ENCODE measurements at regions of chr12 and their contacts with region 1.

Region 1: DNA sequence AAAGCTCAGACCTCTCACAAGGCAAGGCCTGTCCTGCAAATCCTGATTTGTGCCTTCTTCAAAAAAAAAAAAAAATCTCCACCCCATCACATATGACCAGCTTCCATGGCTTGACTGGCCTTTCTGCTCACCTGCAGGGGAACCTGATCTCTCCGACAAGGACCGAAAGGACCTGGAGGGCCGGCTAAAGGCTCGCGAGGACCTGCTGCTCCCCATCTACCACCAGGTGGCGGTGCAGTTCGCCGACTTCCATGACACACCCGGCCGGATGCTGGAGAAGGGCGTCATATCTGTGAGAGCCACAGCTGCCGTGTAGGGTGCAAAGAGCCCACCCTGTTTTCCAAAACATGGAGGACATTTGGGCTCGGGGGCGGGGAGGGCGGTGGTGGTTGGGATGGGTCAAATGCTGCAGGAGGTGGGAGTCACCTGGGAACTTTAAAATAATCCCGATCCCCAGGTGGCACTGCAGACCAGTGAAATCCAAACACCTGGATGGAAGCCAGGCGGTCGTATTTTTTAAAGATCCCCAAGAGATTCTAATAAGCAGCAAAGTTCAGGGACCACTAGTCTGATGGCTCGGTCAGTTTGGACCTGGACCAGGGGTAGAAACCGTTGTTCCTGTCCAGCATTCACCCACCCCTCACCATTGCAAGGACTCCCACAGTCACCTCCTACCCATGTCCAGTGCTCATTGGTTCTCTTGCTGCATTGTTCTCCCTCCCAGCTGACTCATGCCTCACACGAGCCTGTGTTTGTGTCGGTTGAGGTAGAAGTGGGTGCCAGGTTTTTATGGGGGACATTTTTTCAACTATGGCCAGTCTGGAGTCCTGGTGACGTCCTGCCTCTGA is 44.8 kb downstream of the FOXN4 start:
- DNase-seq: peak; percentile 78 to 86
- ATAC-seq: peak; percentile 80 to 94; a peak in 5 of 6 replicates
- H3K4me3 ChIP-seq: no peak overlapping the region
- H3K27ac ChIP-seq: no peak overlapping the region
- H3K4me1 ChIP-seq: no peaks in the 10 kb centered on the region
- CTCF ChIP-seq: peak; percentile 69
- EP300 ChIP-seq: no peak
- POLR2A ChIP-seq: no peak
- RAD21 ChIP-seq: peak; percentile 72 to 74

Region 2: DNA sequence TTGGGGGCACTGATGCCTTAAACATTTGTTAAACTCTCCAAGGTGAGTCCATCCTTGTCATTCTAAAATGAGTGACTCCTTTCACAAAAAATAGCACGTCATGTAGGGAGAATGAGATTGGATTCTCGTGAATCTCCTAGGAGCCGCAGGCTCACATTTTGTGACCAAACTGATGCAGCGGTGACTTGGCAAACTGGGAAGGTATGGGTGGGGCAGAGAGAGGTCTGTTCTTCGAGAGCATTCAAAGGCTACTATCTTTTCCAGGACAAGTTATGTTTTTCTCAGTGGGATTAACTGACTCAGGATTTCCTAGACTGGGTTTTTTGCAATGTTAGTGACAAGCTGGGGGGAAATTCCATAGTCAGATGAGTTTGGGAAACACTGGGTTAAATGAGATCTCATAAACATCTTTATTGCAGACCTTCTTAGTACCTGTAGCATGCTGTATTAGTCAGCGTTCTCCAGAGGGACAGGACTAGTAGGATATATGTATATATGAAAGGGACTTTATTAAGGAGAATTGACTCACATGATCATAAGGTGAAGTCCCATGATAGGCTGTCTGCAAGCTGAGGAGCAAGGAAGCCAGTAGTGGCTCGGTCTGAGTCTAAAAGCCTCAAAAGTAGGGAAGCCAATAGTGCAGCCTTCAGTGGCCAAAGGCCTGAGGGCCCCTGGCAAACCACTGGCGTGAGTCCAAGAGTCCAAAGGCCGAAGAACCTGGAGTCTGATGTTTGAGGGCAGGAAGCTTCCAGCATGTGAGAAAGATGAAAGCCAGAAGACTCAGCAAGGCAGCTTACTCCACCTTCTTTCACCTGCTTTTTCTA is 16.3 kb before region 1 on chr12:
- CTCF ChIA-PET with region 1: interaction called, 11 read pairs
- POLR2A ChIA-PET with region 1: no interaction called
- DNase-seq: peak in 1 of 2 experiments; percentile 49
- ATAC-seq: peak; percentile 43 to 70; a peak in 5 of 6 replicates
- H3K4me3 ChIP-seq: no peak overlapping the region
- H3K27ac ChIP-seq: peak overlapping the region; percentile 7 to 44; a peak in 3 of 6 replicates
- H3K4me1 ChIP-seq: peaks cover 15% of the 10 kb centered on the region
- CTCF ChIP-seq: no peak
- EP300 ChIP-seq: no peak
- POLR2A ChIP-seq: no peak
- RAD21 ChIP-seq: no peak

Region 3: GRCh38 chr12:109277899-109278762 is 13.8 kb after region 1 on chr12:
- CTCF ChIA-PET with region 1: interaction called, 21 read pairs
- POLR2A ChIA-PET with region 1: no interaction called
- DNase-seq: peak; percentile 30 to 66
- ATAC-seq: peak; percentile 59 to 75
- H3K4me3 ChIP-seq: no peak overlapping the region; the same call in 2 of the 3 replicates
- H3K27ac ChIP-seq: peak overlapping the region; percentile 54 to 80
- H3K4me1 ChIP-seq: peaks cover 28% of the 10 kb centered on the region
- CTCF ChIP-seq: no peak
- EP300 ChIP-seq: no peak
- POLR2A ChIP-seq: no peak
- RAD21 ChIP-seq: no peak

Region 4: GRCh38 chr12:109385339-109386067 is 121.2 kb after region 1 on chr12:
- CTCF ChIA-PET with region 1: interaction called, 36 read pairs
- POLR2A ChIA-PET with region 1: no interaction called
- DNase-seq: peak; percentile 51 to 64
- ATAC-seq: peak; percentile 74 to 80
- H3K4me3 ChIP-seq: no peak overlapping the region
- H3K27ac ChIP-seq: peak overlapping the region; percentile 46 to 47; a peak in 1 of 6 replicates
- H3K4me1 ChIP-seq: peaks cover 8% of the 10 kb centered on the region; the same call in 2 of the 3 replicates
- CTCF ChIP-seq: peak; percentile 92
- EP300 ChIP-seq: no peak
- POLR2A ChIP-seq: no peak
- RAD21 ChIP-seq: peak; percentile 94 to 97

Region 5: DNA sequence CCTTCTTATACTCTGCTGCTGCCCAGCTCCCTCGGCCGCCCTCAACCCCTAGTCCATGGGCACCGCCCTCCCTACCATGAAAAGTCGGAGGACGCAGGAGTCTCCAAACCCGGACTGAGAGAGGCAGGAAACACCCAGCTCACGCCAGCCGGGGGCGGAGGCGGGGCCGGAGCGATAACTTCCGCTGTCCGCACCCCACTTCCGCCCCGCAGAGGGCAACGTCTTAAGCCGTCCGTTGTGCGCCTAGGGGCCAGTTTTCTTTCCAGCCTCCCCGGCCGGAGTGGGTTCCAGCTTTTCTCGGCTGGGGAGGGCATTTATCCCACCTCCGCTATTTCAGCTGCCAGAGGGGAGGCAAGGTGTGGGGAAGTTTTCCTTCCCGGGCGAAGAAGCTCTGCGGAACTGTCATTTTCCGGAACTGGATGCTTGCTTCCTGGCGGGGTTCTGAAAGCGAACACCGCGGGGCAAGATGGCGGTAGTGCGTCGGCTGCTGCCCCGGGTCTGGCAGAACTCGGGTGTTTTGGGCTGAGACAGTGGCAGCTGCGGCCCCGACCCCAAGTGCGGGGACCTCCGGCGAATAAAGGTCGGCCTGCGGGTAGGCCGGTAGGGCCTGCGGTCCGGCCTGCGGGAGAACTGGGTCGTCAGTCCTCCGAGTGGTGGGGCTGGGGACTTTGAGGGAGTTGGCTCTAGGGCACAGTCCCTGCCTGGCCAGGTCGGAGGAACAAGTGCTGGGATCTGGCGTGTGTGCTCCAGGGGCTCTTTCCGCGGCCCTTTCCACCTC is 213.1 kb after region 1 on chr12 and contains the starts of genes KCTD10 and UBE3B:
- CTCF ChIA-PET with region 1: no interaction called
- POLR2A ChIA-PET with region 1: no interaction called
- DNase-seq: peak; percentile 91 to 94
- ATAC-seq: peak; percentile 97 to 99
- H3K4me3 ChIP-seq: peak within 1 kb of the TSS; percentile 95
- H3K27ac ChIP-seq: peak within 1 kb of the TSS; percentile 99
- H3K4me1 ChIP-seq: peaks cover 17% of the 10 kb centered on the region; the same call in 2 of the 3 replicates
- CTCF ChIP-seq: no peak
- EP300 ChIP-seq: no peak
- POLR2A ChIP-seq: peak; percentile 67
- RAD21 ChIP-seq: no peak
- polyA plus RNA-seq, gene KCTD10: 50.4 and 52.3 TPM in 2 replicates
- polyA plus RNA-seq, gene UBE3B: 38.0 and 42.4 TPM in 2 replicates

Measured in A549 (cell line).